Activated naive CD4-positive, alpha-beta T cell treated with anti-CD3 and anti-CD28 coated beads, Interleukin-2, amount 10 ng/mL, durations not matched to agents 7 days and 5 days (primary cell): ENCODE measurements at regions of chr3 and their contacts with region 1.

Region 1: DNA sequence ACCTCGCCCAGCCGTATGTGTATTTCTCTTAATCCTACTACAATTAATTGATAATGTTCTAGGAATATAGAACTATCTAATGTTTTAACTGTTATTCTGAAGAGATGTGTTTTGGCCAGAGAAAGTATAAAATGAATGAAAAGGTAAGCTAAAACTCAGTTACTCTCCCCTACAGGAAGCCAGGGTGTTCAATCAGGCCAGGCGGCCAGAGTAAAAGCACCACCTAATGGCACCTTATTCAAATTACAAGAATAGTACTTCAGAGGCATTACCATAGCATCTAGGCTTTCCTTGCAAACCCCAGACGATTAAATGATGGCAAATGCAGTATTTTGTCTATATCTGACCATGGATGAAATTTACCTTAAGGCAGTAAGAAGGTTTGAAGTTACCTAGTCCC is 10.4 kb downstream of the SLC12A8 start:
- DNase-seq: peak; percentile 52
- H3K4me3 Mint-ChIP-seq: no peak overlapping the region
- H3K27ac Mint-ChIP-seq: no peak overlapping the region
- H3K4me1 Mint-ChIP-seq: no peaks in the 10 kb centered on the region
- H3K27me3 Mint-ChIP-seq: peaks cover 26% of the 10 kb centered on the region

Region 2: GRCh38 chr3:124928333-124929202 is 273.6 kb before region 1 on chr3:
- CTCF ChIA-PET with region 1: interaction called, 14 read pairs
- DNase-seq: peak; percentile 78
- H3K4me3 Mint-ChIP-seq: no peak overlapping the region
- H3K27ac Mint-ChIP-seq: no peak overlapping the region
- H3K4me1 Mint-ChIP-seq: peaks cover 6% of the 10 kb centered on the region
- H3K27me3 Mint-ChIP-seq: peaks cover 38% of the 10 kb centered on the region

Region 3: GRCh38 chr3:124995460-124995994 is 206.7 kb before region 1 on chr3:
- CTCF ChIA-PET with region 1: interaction called, 23 read pairs
- DNase-seq: peak; percentile 73
- H3K4me3 Mint-ChIP-seq: no peak overlapping the region
- H3K27ac Mint-ChIP-seq: peak overlapping the region; percentile 71
- H3K4me1 Mint-ChIP-seq: peaks cover 30% of the 10 kb centered on the region
- H3K27me3 Mint-ChIP-seq: no peaks in the 10 kb centered on the region

Region 4: GRCh38 chr3:126293370-126294082 is 1091.3 kb after region 1 on chr3:
- CTCF ChIA-PET with region 1: no interaction called
- DNase-seq: no peak
- H3K4me3 Mint-ChIP-seq: no peak overlapping the region
- H3K27ac Mint-ChIP-seq: no peak overlapping the region
- H3K4me1 Mint-ChIP-seq: no peaks in the 10 kb centered on the region
- H3K27me3 Mint-ChIP-seq: peaks cover 26% of the 10 kb centered on the region